Thyroid gland (tissue), 4 donors: ENCODE measurements at regions of chr12 and their contacts with region 1.

Region 1: DNA sequence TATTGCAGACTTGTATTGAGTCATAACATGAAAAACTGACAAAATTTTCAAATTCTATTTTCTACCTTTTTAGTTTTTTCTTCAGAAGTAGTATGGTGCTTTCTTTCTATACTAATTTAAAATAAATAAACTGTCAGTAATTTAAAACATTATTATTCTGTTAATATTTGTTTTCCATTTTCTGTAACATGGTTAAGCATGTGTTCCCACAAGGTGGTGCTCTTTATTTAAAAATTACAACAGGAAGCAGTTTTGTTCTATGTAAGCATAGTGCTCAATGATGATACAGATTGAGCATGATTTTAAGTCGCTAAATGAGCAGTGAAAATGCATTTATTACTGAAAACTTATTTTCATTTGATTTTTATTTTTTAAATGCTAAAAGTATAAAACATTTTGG is 114.6 kb downstream of the PPFIA2 start:
- DNase-seq: no peak
- H3K4me3 ChIP-seq: no peak overlapping the region
- H3K27ac ChIP-seq: no peak overlapping the region
- H3K4me1 ChIP-seq: no peaks in the 10 kb centered on the region
- H3K27me3 ChIP-seq: no peaks in the 10 kb centered on the region
- CTCF ChIP-seq: peak in 3 of 6 experiments; percentile 16 to 25 (median 23)
- POLR2A ChIP-seq: no peak

Region 2: DNA sequence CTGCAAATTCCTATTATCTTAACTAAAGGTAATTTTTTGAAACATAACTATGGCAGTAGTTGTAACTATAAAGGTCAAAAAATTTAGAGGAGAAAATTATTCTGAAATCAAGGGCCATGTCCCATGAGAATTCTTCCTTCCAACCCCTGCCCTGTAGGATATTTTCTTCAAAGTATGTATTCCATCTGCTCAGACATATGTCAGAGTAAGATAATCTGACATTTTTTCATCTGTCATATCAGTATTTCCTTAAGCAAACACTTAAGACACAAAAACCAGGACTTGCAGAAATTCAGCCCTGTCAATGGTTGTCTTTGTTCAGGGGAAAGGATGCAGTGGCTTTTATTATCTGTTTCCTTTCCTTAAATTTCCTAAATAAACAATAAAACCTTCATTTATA is 530.3 kb before region 1 on chr12:
- intact Hi-C with region 1: no loop called
- DNase-seq: no peak
- H3K4me3 ChIP-seq: no peak overlapping the region
- H3K27ac ChIP-seq: no peak overlapping the region
- H3K4me1 ChIP-seq: no peaks in the 10 kb centered on the region
- H3K27me3 ChIP-seq: no peaks in the 10 kb centered on the region
- CTCF ChIP-seq: no peak
- POLR2A ChIP-seq: no peak

Region 3: DNA sequence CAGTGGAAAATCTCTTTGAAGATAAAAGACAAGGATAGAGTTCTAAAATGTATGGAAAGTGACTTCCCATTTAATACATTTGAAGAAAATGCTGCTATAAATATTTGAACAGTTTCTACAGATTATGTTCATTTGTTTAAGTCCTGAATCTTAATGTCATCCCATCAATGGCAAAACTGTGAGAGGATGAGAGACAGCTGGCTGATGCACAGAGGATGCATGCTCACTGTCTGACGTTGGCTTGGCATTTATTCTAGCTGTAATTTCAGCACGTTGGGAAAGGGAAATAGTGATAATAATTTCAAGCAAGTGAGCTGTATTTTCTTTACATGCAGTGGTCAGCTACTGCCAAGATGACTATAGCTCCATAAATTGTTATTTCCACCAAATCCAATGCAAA is 74.1 kb after region 1 on chr12:
- intact Hi-C with region 1: no loop called
- DNase-seq: no peak
- H3K4me3 ChIP-seq: no peak overlapping the region
- H3K27ac ChIP-seq: no peak overlapping the region
- H3K4me1 ChIP-seq: no peaks in the 10 kb centered on the region
- H3K27me3 ChIP-seq: no peaks in the 10 kb centered on the region
- CTCF ChIP-seq: no peak
- POLR2A ChIP-seq: no peak

Region 4: GRCh38 chr12:82326905-82327503 is 682.5 kb after region 1 on chr12:
- intact Hi-C with region 1: loop called (anchors 10 kb)
- DNase-seq: no peak
- H3K4me3 ChIP-seq: no peak overlapping the region
- H3K27ac ChIP-seq: no peak overlapping the region
- H3K4me1 ChIP-seq: no peaks in the 10 kb centered on the region
- H3K27me3 ChIP-seq: no peaks in the 10 kb centered on the region
- CTCF ChIP-seq: peak in 4 of 6 experiments; percentile 13 to 43 (median 22)
- POLR2A ChIP-seq: no peak